HepG2 (cell line): ENCODE measurements at regions of chr17 and their contacts with region 1.

Region 1: DNA sequence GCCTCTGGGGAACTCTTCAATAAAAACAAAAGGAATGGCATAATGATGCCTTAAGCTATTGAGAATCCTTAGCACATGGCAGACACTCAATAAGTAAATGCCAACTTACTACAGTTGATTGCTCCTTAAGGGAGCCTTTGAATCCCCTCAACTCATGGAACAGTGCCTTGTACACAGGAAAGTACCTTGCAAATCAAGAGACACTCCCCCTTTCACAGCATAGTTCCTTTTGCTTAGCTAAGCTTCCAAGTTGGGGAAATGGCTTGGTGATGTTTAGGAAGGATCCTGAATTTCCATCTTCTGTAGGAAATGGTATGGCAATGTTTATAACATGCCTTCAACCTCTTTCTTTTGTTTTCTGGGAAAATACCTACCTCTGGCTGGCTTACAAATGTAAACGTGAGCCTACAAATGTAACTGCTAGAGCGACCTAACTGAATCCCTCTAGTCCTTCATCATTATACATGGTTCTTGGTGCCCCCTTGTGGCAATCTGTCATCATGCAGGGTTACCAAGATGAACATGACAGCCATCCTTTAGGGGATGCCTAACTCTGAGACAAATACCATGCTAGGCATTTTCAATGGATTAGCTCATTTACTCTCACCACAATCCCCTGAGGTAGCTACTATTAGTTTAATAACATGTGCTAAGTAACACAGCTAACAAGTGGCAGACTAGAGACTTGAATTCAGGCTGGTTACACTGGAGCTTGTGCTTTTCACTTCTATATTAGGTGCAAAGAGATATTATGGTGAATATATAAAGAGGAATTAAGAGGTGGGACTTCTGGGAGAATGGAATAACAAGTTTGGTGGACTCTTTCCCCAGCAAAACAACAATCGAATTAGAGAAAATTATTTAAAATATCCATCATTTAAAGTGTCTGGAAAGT is 65.0 kb downstream of the MMD start:
- DNase-seq: peak; percentile 87
- ATAC-seq: peak; percentile 100
- H3K4me3 ChIP-seq: no peak overlapping the region
- H3K27ac ChIP-seq: no peak overlapping the region
- H3K4me1 ChIP-seq: peaks cover 16% of the 10 kb centered on the region
- H3K27me3 ChIP-seq: no peaks in the 10 kb centered on the region
- CTCF ChIP-seq: peak; percentile 95
- EP300 ChIP-seq: no peak
- POLR2A ChIP-seq: no peak
- RAD21 ChIP-seq: peak; percentile 86

Region 2: DNA sequence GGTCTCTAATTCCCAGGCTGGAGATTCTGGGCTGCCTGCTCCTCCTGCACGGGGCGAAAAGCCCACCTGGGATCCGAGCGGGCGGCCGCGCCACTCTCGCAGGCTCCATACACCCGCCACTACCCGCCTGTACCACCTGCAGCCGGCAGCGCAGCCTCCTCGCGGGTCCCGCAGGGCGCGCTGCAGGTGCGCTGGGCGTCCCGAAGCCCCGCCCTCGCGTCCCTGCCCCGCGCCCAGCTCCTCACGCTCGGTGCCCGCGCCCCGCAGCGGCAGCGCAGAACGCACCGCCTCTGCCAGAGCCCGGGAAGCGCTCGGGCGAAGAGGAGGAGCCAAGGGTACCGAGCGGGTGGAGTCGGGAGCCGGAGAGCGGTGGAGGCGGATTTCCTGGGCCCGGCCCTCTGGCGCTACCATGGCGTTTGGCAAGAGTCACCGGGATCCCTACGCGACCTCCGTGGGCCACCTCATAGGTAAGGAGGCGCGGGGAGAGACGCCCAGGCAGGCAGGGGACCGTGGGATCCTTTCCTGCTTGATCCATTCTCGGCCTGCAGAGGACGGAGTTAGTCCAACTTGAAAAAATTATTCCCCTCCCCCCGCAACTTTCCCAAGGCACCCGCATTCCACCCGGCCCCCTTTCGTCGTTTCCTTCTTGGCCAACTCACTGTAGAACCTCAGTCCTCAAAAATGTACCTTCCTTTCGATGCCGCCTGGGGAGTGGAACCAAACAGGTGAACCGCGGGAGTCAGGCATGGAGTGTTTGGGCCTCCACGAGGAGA is 456.0 kb before region 1 on chr17 and contains the start of gene TOM1L1:
- CTCF ChIA-PET with region 1: no interaction called
- POLR2A ChIA-PET with region 1: no interaction called
- in situ Hi-C with region 1: no loop called
- intact Hi-C with region 1: loop called (anchors 10 kb)
- DNase-seq: peak; percentile 87
- ATAC-seq: peak; percentile 96
- H3K4me3 ChIP-seq: peak within 1 kb of the TSS; percentile 68 to 92 (median 91)
- H3K27ac ChIP-seq: peak within 1 kb of the TSS; percentile 41
- H3K4me1 ChIP-seq: peaks cover 12% of the 10 kb centered on the region
- H3K27me3 ChIP-seq: no peaks in the 10 kb centered on the region; a peak in 1 of 5 replicates
- CTCF ChIP-seq: peak; percentile 71
- EP300 ChIP-seq: peak; percentile 21 to 48; a peak in 1 of 4 replicates
- POLR2A ChIP-seq: peak; percentile 65 to 69
- RAD21 ChIP-seq: peak; percentile 75
- total RNA-seq, gene TOM1L1: 45.3 and 61.1 TPM in 2 replicates

Region 3: DNA sequence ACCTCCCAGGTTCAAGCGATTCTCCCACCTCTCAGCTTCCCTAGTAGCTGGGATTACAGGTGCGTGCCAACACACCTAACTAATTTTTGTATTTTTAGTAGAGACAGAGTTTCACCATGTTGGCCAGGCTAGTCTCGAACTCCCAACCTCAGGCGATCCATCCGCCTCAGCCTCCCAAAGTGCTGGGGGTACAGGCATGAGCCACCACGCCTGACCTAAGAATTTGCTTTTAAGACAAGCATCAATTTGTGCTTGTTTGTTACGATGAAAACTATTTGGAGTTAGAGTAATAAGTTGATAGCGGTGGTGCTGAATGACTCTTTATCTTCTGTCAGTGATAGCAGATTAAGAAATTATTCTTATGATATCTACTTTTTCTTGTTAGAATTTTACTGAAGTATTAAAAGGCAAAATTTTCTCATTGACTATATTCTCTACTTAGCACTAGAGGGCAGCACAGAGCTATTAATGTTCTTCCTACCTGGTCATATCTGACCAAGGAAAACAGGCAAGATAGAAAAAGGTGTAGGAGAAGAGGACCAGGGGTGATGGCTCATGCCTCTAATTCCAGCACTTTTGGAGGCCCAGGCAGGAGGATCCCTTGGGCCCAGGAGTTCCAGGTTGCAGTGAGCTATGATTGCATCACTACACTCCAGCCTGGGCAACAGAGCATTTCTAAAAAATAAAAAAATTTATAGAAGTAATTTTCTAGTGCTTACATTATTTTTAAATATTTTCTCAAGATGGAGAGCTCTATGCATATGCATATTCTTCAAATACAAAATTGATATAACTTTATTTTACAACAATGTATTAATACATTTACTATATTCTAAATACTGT is 363.7 kb before region 1 on chr17:
- CTCF ChIA-PET with region 1: interaction called, 10 read pairs
- POLR2A ChIA-PET with region 1: interaction called, 3 read pairs
- in situ Hi-C with region 1: loop called (anchors 5 kb)
- intact Hi-C with region 1: loop called (anchors 1 kb)
- DNase-seq: peak; percentile 65
- ATAC-seq: peak; percentile 86
- H3K4me3 ChIP-seq: no peak overlapping the region
- H3K27ac ChIP-seq: no peak overlapping the region
- H3K4me1 ChIP-seq: no peaks in the 10 kb centered on the region
- H3K27me3 ChIP-seq: no peaks in the 10 kb centered on the region
- CTCF ChIP-seq: peak; percentile 74
- EP300 ChIP-seq: no peak
- POLR2A ChIP-seq: no peak
- RAD21 ChIP-seq: peak; percentile 57

Region 4: GRCh38 chr17:55053855-55054254 is 302.8 kb before region 1 on chr17:
- CTCF ChIA-PET with region 1: interaction called, 6 read pairs
- POLR2A ChIA-PET with region 1: no interaction called
- in situ Hi-C with region 1: loop called (anchors 10 kb)
- intact Hi-C with region 1: no loop called
- DNase-seq: no peak
- ATAC-seq: no peak
- H3K4me3 ChIP-seq: no peak overlapping the region
- H3K27ac ChIP-seq: no peak overlapping the region
- H3K4me1 ChIP-seq: no peaks in the 10 kb centered on the region
- H3K27me3 ChIP-seq: no peaks in the 10 kb centered on the region
- CTCF ChIP-seq: peak; percentile 46
- EP300 ChIP-seq: no peak
- POLR2A ChIP-seq: no peak
- RAD21 ChIP-seq: peak; percentile 43; the same call in 1 of the 2 replicates

Region 5: DNA sequence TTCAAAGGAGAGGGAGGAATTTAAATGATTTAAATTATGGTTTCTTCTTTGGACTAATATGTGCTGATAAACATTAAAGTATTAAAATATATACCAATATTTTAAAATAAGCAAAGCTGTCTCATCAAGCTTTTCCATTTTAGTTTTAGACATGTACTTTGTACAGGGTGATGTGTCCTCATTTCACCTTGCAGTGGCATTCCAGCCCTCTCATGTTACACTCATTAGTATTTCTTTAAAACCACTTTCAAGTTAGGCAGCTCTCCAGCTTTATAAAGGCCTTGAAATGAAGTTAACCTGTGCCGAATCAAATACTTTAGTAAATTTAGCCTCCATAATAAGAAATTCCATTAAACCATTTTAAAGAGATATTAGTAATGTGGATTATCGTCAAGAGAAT is 199.5 kb before region 1 on chr17:
- CTCF ChIA-PET with region 1: no interaction called
- POLR2A ChIA-PET with region 1: no interaction called
- in situ Hi-C with region 1: no loop called
- intact Hi-C with region 1: loop called (anchors 5 kb)
- DNase-seq: peak; percentile 48
- ATAC-seq: peak; percentile 73
- H3K4me3 ChIP-seq: no peak overlapping the region
- H3K27ac ChIP-seq: peak overlapping the region; percentile 42
- H3K4me1 ChIP-seq: peaks cover 14% of the 10 kb centered on the region
- H3K27me3 ChIP-seq: no peaks in the 10 kb centered on the region
- CTCF ChIP-seq: no peak
- EP300 ChIP-seq: no peak
- POLR2A ChIP-seq: no peak
- RAD21 ChIP-seq: no peak

Region 6: GRCh38 chr17:55388842-55389241 is 32.2 kb after region 1 on chr17:
- CTCF ChIA-PET with region 1: no interaction called
- POLR2A ChIA-PET with region 1: no interaction called
- in situ Hi-C with region 1: no loop called
- intact Hi-C with region 1: no loop called
- DNase-seq: no peak
- ATAC-seq: peak; percentile 14; the same call in 2 of the 3 replicates
- H3K4me3 ChIP-seq: no peak overlapping the region
- H3K27ac ChIP-seq: no peak overlapping the region
- H3K4me1 ChIP-seq: peaks cover 43% of the 10 kb centered on the region
- H3K27me3 ChIP-seq: no peaks in the 10 kb centered on the region
- CTCF ChIP-seq: no peak
- EP300 ChIP-seq: no peak
- POLR2A ChIP-seq: no peak
- RAD21 ChIP-seq: no peak

Region 7: GRCh38 chr17:55513885-55514591 is 157.4 kb after region 1 on chr17:
- CTCF ChIA-PET with region 1: interaction called, 28 read pairs
- POLR2A ChIA-PET with region 1: no interaction called
- in situ Hi-C with region 1: loop called (anchors 5 kb)
- intact Hi-C with region 1: loop called (anchors 1 kb)
- DNase-seq: peak; percentile 84
- ATAC-seq: peak; percentile 81
- H3K4me3 ChIP-seq: no peak overlapping the region
- H3K27ac ChIP-seq: no peak overlapping the region
- H3K4me1 ChIP-seq: peaks cover 31% of the 10 kb centered on the region
- H3K27me3 ChIP-seq: peaks cover 0 to 1% of the 10 kb centered on the region in 2 experiments; a peak in 1 of 5 replicates
- CTCF ChIP-seq: peak; percentile 93
- EP300 ChIP-seq: 0 out of 4 replicates have a peak, but pooled peaks of 1 of the 2 experiments have one; percentile 12
- POLR2A ChIP-seq: no peak
- RAD21 ChIP-seq: peak; percentile 90